Activated CD4-positive, alpha-beta memory T cell treated with anti-CD3 and anti-CD28 coated beads for 36 hours (primary cell): ENCODE measurements at regions of chr7 and their contacts with region 1.

Region 1: DNA sequence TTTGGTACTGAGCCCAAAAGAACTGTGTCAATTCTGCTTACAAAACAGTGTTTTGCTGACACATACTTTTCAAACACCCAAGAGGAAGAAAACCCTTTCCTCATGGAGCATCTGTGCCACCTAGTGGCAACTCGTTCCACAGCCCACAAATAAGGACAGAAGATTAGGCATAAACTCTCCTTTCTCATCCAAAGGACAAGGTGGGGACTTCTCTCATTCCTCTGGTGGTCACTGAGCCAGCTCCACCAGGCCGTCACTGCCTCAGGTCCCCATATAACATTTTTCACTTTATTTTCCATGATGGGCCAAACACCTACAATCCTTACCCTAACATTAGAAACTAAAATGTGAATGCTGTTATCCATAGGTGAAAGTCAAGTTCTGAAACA is 76.9 kb downstream of the RNF216 start:
- DNase-seq: peak; percentile 85
- H3K4me3 Mint-ChIP-seq: no peak overlapping the region
- H3K27ac Mint-ChIP-seq: no peak overlapping the region
- H3K4me1 Mint-ChIP-seq: peaks cover 73% of the 10 kb centered on the region
- H3K27me3 Mint-ChIP-seq: no peaks in the 10 kb centered on the region

Region 2: GRCh38 chr7:4479367-4480039 is 1225.0 kb before region 1 on chr7:
- CTCF ChIA-PET with region 1: no interaction called
- POLR2A ChIA-PET with region 1: no interaction called
- intact Hi-C with region 1: no loop called
- DNase-seq: peak; percentile 16
- H3K4me3 Mint-ChIP-seq: no peak overlapping the region
- H3K27ac Mint-ChIP-seq: no peak overlapping the region
- H3K4me1 Mint-ChIP-seq: no peaks in the 10 kb centered on the region
- H3K27me3 Mint-ChIP-seq: no peaks in the 10 kb centered on the region

Region 3: DNA sequence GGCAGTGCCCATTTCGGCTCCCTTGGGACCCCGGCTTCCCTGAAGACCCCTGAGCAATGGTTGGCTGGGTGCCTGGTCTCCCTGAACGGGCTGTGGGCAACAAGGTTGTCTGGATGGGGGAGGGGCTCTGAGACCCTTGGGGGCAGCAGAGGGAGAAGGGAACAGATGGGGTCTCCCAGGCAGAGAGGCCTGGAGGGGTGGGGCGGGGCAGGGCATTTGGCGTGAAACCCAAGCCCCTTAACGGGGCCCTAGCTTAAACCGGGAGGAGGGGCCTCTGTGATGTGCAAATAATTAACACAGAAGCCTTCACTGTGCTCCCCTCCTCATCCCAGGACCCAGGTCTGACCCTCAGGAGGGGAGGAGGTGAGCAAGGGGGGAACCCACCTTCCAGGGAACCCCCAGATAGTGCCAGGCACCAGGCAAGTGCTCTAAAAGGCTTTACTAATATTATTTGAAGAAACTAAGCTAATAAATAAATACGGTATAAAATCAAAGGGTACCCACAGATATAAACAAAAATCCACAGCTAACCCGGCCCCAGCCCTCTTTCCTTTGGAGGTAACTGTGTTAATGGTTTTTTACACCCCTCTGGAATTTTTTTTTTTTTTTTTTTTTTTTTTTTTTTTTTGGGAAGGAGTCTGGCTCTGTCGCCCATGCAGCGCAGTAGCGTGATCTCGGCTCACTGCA is 93.9 kb before region 1 on chr7:
- CTCF ChIA-PET with region 1: no interaction called
- POLR2A ChIA-PET with region 1: no interaction called
- intact Hi-C with region 1: no loop called
- DNase-seq: no peak
- H3K4me3 Mint-ChIP-seq: no peak overlapping the region
- H3K27ac Mint-ChIP-seq: no peak overlapping the region
- H3K4me1 Mint-ChIP-seq: no peaks in the 10 kb centered on the region
- H3K27me3 Mint-ChIP-seq: no peaks in the 10 kb centered on the region

Region 4: GRCh38 chr7:5677538-5678294 is 26.8 kb before region 1 on chr7:
- CTCF ChIA-PET with region 1: interaction called, 43 read pairs
- POLR2A ChIA-PET with region 1: interaction called, 4 read pairs
- intact Hi-C with region 1: loop called (anchors 1 kb)
- DNase-seq: peak; percentile 70
- H3K4me3 Mint-ChIP-seq: no peak overlapping the region
- H3K27ac Mint-ChIP-seq: peak overlapping the region; percentile 20
- H3K4me1 Mint-ChIP-seq: peaks cover 42% of the 10 kb centered on the region
- H3K27me3 Mint-ChIP-seq: no peaks in the 10 kb centered on the region

Region 5: DNA sequence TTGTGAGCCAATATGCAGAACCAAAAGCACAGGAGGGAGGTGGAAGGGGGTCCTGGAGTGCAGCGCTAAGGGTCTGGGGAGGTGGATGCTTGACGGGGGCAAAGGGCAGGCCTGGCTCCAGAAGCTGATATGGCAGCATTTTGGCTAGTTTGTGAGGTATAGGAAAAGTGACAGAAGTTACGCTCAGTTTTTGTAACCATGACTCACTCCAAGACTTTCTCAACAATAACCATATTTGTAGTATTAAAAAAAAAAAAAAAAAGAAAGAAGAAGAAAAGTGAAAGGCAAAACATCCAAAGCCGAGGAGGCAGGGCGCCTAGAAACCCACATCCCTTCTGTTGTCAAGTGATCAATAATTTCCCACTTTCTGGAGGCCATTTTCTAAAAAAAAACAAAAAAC is 15.4 kb before region 1 on chr7:
- CTCF ChIA-PET with region 1: interaction called, 14 read pairs
- POLR2A ChIA-PET with region 1: interaction called, 10 read pairs
- intact Hi-C with region 1: loop called (anchors 1 kb)
- DNase-seq: peak; percentile 78
- H3K4me3 Mint-ChIP-seq: peak overlapping the region; percentile 3
- H3K27ac Mint-ChIP-seq: peak overlapping the region; percentile 76
- H3K4me1 Mint-ChIP-seq: peaks cover 86% of the 10 kb centered on the region
- H3K27me3 Mint-ChIP-seq: no peaks in the 10 kb centered on the region

Region 6: DNA sequence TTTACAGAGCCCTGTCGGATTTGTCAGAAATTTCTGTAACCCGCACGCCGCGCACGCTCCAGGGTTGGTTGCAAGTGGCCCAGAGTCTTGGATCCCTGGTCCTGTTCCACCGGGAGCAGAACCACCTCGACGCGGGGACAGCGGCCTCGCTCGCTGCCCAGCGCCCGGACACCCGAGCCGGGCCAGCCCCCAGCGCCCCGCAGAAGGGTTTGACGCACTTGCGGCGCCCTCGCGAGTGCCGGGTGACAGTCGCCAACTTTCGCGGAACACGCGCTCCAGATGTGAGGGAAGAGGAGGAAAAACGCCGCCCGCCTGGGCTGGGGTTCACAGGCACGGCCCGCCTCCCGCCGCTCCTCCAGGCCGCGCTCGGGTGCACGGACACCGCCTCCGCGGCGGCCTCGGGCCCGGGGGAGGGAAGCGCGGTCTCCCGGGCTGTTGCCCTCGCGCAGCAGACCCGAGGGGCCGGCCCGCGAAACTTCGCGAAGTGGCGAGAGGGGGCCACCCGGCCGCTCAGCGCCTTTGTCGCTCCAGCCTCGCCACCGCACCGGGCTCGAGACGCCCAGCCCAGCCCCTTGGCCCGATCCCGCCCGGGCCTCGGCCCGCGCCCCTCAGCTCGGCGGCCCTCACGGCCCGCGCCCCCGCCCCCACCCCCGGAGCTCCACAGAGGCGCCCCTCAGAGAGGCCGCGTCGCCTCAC is 76.4 kb after region 1 on chr7:
- CTCF ChIA-PET with region 1: interaction called, 3 read pairs
- POLR2A ChIA-PET with region 1: no interaction called
- intact Hi-C with region 1: loop called (anchors 2 kb)
- DNase-seq: peak; percentile 53
- H3K4me3 Mint-ChIP-seq: peak overlapping the region; percentile 79
- H3K27ac Mint-ChIP-seq: peak overlapping the region; percentile 76
- H3K4me1 Mint-ChIP-seq: peaks cover 38% of the 10 kb centered on the region
- H3K27me3 Mint-ChIP-seq: no peaks in the 10 kb centered on the region

Region 7: GRCh38 chr7:5822742-5823503 is 118.4 kb after region 1 on chr7:
- CTCF ChIA-PET with region 1: interaction called, 3 read pairs
- POLR2A ChIA-PET with region 1: no interaction called
- intact Hi-C with region 1: loop called (anchors 5 kb)
- DNase-seq: peak; percentile 98
- H3K4me3 Mint-ChIP-seq: peak overlapping the region; percentile 74
- H3K27ac Mint-ChIP-seq: peak overlapping the region; percentile 76
- H3K4me1 Mint-ChIP-seq: peaks cover 27% of the 10 kb centered on the region
- H3K27me3 Mint-ChIP-seq: no peaks in the 10 kb centered on the region